Gastrocnemius medialis (tissue), 4 donors: ENCODE measurements at regions of chr16 and their contacts with region 1.

Region 1: DNA sequence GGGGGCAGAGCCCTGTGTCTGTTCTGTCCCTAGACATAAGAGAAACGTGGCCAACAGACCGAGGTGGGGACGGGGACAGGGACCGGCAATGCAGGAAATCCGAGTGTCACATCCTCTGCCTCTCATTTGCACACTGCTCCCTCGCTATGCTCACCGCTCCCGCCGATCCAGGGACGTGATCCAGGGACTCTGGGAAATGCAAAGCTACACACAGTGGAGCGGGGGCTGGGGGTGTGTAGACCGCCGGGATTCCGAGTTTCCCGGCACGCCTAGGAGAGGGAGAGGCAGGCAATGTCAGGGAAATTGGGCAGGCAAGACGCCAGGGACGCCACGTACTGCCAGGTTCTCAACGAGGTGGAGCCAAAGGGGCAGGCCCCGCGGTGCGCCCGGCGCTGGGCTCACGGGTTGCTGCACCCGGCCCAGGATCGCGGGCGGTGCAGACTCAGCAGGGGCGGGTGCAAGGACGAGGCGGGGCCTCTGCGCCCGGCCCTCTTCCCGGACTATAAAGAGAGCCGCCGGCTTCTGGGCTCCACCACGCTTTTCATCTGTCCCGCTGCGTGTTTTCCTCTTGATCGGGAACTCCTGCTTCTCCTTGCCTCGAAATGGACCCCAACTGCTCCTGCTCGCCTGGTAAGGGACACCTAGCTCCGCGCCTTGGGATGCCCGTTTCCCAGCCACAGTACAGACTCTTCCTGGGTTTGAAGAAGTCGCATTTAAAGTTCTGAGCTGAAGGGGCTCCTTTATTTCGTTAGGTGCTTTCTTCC is at the start of gene MT1X:
- DNase-seq: peak; percentile 95 to 97
- ATAC-seq: peak; percentile 28 to 29
- H3K4me3 ChIP-seq: peak within 1 kb of the TSS; percentile 66 to 83 (median 78)
- H3K27ac ChIP-seq: peak within 1 kb of the TSS; percentile 89 to 94 (median 91)
- H3K4me1 ChIP-seq: peaks cover 45 to 46% of the 10 kb centered on the region in 2 donors
- H3K27me3 ChIP-seq: no peaks in the 10 kb centered on the region
- CTCF ChIP-seq: no peak
- POLR2A ChIP-seq: peak in 1 of 2 donors; percentile 99
- total RNA-seq, gene MT1X: 3,871 to 10,589 (median 6,239) TPM

Region 2: GRCh38 chr16:56425439-56425832 is 256.7 kb before region 1 on chr16 and contains the start of gene AMFR:
- in situ Hi-C with region 1: loop called in 1 of 4 experiments (anchors 25 kb)
- intact Hi-C with region 1: loop called (anchors 5 kb)
- DNase-seq: peak; percentile 31 to 84
- ATAC-seq: peak; percentile 88 to 90
- H3K4me3 ChIP-seq: peak within 1 kb of the TSS; percentile 74 to 96 (median 92)
- H3K27ac ChIP-seq: peak within 1 kb of the TSS; percentile 87 to 96 (median 96)
- H3K4me1 ChIP-seq: peaks cover 36 to 37% of the 10 kb centered on the region in 2 donors
- H3K27me3 ChIP-seq: no peaks in the 10 kb centered on the region
- CTCF ChIP-seq: peak in 4 of 5 experiments; percentile 78 to 86 (median 82)
- POLR2A ChIP-seq: peak; percentile 55 to 75
- total RNA-seq, gene AMFR: 349 to 951 (median 571) TPM

Region 3: GRCh38 chr16:56481468-56482112 is 200.5 kb before region 1 on chr16:
- in situ Hi-C with region 1: no loop called
- intact Hi-C with region 1: loop called (anchors 2 kb)
- DNase-seq: peak; percentile 83 to 89
- ATAC-seq: peak; percentile 86 to 91
- H3K4me3 ChIP-seq: no peak overlapping the region
- H3K27ac ChIP-seq: peak overlapping the region; percentile 92 to 98 (median 94)
- H3K4me1 ChIP-seq: peaks cover 38 to 62% of the 10 kb centered on the region in 2 donors
- H3K27me3 ChIP-seq: no peaks in the 10 kb centered on the region
- CTCF ChIP-seq: no peak
- POLR2A ChIP-seq: peak; percentile 45 to 66

Region 4: GRCh38 chr16:56625140-56625942 is 56.8 kb before region 1 on chr16 and contains the start of gene MT1E:
- in situ Hi-C with region 1: no loop called
- intact Hi-C with region 1: loop called (anchors 1 kb)
- DNase-seq: peak; percentile 43 to 83
- ATAC-seq: peak; percentile 77 to 80
- H3K4me3 ChIP-seq: peak within 1 kb of the TSS; percentile 66 to 84 (median 74)
- H3K27ac ChIP-seq: peak within 1 kb of the TSS; percentile 88 to 96 (median 92)
- H3K4me1 ChIP-seq: peaks cover 18 to 23% of the 10 kb centered on the region in 2 donors
- H3K27me3 ChIP-seq: no peaks in the 10 kb centered on the region
- CTCF ChIP-seq: no peak
- POLR2A ChIP-seq: peak; percentile 88 to 91
- total RNA-seq, gene MT1E: 63.0 to 434 (median 267) TPM

Region 5: DNA sequence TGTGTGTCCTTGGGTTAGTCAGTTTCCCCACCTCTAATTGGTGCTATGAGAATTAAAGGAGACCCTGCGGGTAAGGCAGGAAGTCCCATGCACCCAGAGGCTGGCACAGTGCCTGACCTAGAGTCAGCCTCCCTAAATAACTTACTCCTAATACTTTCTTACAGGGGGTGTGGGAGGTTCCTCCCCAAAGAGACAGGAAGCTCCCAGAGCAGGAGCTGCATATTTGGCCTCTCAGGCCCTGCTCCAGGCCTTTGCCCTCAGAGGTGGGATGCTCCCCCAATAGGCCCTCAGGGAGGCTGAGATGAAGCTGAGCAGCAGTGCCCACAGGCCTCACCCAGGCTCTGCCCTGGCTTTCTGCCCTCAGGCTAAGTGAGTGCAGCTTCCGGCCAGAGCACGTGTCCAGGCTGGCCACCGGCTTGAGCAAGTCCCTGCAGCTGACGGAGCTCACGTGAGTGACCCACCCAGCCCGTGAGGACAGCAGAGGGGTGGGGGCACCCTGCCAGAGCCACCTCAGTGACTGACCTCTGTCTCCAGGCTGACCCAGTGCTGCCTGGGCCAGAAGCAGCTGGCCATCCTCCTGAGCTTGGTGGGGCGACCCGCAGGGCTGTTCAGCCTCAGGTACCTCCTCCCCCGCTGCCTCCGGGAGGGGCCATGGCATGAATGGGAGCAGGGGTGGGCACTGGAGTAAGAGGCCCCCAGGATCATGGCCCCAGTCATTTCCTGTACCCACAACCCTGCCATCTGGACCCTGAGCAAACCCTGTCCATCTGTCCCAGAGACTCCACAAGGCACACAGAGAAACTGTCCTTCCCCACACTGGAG is 379.2 kb after region 1 on chr16:
- in situ Hi-C with region 1: no loop called
- intact Hi-C with region 1: loop called (anchors 5 kb)
- DNase-seq: peak; percentile 85 to 97
- ATAC-seq: peak; percentile 89 to 94
- H3K4me3 ChIP-seq: peak overlapping the region in 3 of 4 donors; percentile 11 to 32 (median 23)
- H3K27ac ChIP-seq: peak overlapping the region; percentile 83 to 89 (median 85)
- H3K4me1 ChIP-seq: peaks cover 17 to 20% of the 10 kb centered on the region in 2 donors
- H3K27me3 ChIP-seq: no peaks in the 10 kb centered on the region
- CTCF ChIP-seq: peak in 1 of 5 experiments; percentile 27
- POLR2A ChIP-seq: peak; percentile 48 to 69